ENCODE measurements at regions of chr7 and their contacts with region 1.

Region 1: GRCh38 chr7:114988755-114989375 is 67.0 kb downstream of the MDFIC start:
- DNase-seq: peak; percentile 94

Region 2: GRCh38 chr7:114112806-114113205 is 876.1 kb before region 1 on chr7:
- intact Hi-C with region 1: loop called in 1 of 2 experiments (anchors 5 kb)
- DNase-seq: no peak

Region 3: GRCh38 chr7:116145245-116145852 is 1156.5 kb after region 1 on chr7:
- intact Hi-C with region 1: no loop called
- DNase-seq: no peak

Measured in posterior vena cava (tissue), 2 donors.